CD4-positive, alpha-beta T cell (primary cell): ENCODE measurements at regions of chr15 and their contacts with region 1.

Region 1: DNA sequence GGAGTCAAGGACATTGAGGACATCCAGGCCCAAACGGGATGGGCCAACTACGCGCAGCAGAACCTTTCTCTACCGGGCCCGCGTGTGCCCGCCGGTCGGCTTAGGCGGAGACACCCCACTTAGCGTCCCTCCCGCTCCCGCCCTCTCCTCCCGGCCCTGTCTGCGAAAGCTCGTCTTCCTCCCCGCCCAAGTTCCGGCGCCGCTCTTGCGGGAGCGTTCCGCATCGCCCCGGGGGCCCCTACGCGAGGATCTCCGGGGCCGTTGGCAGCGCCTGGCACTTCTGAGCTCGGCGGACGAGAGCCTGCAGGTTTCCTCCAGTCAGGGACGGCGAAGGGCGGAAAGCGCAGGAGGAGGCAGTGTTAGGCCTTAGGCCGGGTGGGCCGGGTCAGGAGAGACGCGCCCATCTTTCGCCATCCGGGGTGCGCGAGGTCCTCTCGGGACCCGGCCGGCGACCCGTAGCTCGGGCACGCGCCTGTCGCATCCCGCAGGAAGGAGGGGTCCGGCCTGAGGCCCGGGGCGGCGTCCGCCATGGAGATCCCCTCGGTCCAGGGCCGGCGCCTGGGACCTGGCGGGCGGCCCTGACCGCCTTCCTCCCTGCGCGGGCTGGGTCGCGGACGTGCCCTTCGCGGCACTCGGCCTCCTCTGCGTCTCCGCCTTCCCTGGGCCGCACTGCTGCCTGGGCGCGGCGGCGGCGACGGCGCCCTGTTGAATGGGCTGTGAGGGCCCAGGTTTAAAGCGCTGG is at the start of gene FEM1B:
- DNase-seq: peak; percentile 80 to 96 (median 85)
- ATAC-seq: peak; percentile 76
- H3K4me3 ChIP-seq: peak within 1 kb of the TSS; percentile 67
- H3K4me3 Mint-ChIP-seq: peak within 1 kb of the TSS; percentile 98
- H3K27ac ChIP-seq: peak within 1 kb of the TSS; percentile 91 to 94
- H3K27ac Mint-ChIP-seq: peak within 1 kb of the TSS; percentile 99
- H3K4me1 ChIP-seq: peaks cover 36% of the 10 kb centered on the region
- H3K4me1 Mint-ChIP-seq: peaks cover 58% of the 10 kb centered on the region
- H3K27me3 ChIP-seq: no peaks in the 10 kb centered on the region
- H3K27me3 Mint-ChIP-seq: no peaks in the 10 kb centered on the region
- CTCF ChIP-seq: no peak
- total RNA-seq, gene FEM1B: 83.2 to 94.9 TPM

Region 2: DNA sequence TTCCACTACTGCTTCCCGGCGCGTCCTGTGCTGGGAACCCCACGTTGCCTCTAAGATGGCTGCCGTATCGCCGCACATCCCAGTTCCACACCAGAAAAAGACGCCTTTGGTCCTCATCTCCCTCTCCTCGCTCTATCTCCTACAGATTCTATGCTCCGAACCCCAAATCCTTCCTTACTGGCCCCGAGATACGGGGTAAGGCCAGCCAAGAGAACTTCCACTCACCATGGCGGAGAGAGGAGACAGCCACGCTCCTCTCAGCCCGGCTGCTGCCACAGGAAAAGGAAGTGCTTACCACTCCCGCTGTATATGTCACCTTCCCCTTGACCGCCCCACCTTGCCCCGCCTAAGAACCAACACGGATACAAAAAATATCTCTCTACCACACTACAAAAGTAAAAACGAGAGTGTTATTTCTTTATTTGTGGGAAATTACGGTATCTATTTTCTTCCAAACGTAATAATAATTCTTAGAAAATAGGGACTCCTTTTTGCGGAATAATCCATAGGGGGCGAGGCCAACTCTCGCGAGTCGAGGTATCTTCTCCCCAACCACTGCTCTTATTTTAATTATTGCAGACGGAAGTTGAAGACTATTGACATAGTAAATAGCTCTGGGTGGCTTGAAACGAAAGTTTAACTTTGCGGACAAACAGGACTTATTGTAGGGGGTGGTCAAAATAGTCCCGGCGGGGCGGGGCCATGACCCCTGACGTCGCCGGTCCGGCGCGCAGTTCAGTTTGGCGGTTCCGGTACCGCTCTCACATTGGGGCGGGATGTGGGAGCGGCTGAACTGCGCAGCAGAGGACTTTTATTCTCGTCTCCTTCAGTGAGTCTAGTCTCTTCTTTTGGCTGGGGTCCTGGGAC is 1773.0 kb before region 1 on chr15 and contains the starts of genes RPL4 and ZWILCH:
- CTCF ChIA-PET with region 1: no interaction called
- POLR2A ChIA-PET with region 1: no interaction called
- intact Hi-C with region 1: loop called in 1 of 2 experiments (anchors 5 kb)
- DNase-seq: peak; percentile 69 to 91 (median 77)
- ATAC-seq: peak; percentile 85
- H3K4me3 ChIP-seq: peak within 1 kb of the TSS; percentile 95
- H3K4me3 Mint-ChIP-seq: peak within 1 kb of the TSS; percentile 100
- H3K27ac ChIP-seq: peak within 1 kb of the TSS; percentile 85 to 95
- H3K27ac Mint-ChIP-seq: peak within 1 kb of the TSS; percentile 93
- H3K4me1 ChIP-seq: peaks cover 24% of the 10 kb centered on the region
- H3K4me1 Mint-ChIP-seq: peaks cover 51% of the 10 kb centered on the region
- H3K27me3 ChIP-seq: no peaks in the 10 kb centered on the region
- H3K27me3 Mint-ChIP-seq: no peaks in the 10 kb centered on the region
- CTCF ChIP-seq: no peak
- total RNA-seq, gene RPL4: 4,558 to 4,627 TPM
- total RNA-seq, gene ZWILCH: 6.8 to 7.2 TPM

Region 3: DNA sequence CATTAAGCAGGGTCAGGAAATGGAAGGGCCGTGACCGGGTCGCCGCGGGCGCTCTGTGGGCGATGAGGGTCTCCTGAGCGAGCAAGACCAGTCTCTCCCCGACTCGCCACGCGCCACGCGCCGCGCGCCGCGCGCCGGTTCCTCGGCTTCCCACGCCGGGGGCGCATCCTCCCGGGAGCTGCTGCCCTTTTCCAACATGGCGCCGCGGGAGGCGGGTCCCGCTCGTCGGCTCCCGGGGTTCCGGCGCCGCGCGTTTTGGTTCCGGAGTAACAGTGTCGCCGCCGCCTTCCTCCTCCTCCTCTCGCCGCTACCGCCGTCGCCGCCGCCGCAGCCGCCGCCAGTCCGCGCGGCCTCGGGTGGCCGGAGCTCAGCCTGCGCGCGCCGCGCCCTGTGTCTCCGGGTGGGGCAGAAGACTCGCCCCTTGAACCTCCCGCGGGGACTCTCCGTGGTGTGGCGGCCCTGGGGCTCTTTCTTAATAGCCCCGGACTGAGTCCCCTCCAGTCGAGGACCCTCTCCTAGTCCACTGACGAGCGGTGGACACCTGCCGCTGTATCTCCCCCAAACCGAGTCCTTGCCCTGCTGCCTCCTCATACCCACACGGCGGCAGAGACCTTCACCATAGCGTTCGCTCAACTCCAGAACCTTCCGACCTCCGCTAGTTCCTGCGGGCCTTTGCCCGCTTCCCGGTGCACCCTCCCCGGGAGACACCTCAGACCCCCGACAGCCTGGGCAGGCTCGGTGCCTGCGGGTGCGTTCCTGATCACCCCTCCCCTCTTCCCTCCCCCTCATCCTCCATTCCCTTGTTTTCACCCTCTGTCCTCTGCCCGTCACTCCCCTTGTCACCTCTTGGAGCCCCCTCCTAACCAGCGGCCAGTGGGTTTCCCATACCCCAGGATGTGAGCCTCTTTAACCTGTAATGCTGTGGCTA is 735.1 kb before region 1 on chr15 and contains the start of gene MAP2K5:
- CTCF ChIA-PET with region 1: no interaction called
- POLR2A ChIA-PET with region 1: no interaction called
- intact Hi-C with region 1: loop called in 1 of 2 experiments (anchors 2 kb)
- DNase-seq: peak; percentile 73 to 91 (median 81)
- ATAC-seq: peak; percentile 76
- H3K4me3 ChIP-seq: peak within 1 kb of the TSS; percentile 77
- H3K4me3 Mint-ChIP-seq: peak within 1 kb of the TSS; percentile 93
- H3K27ac ChIP-seq: peak within 1 kb of the TSS; percentile 74 to 78
- H3K27ac Mint-ChIP-seq: peak within 1 kb of the TSS; percentile 99
- H3K4me1 ChIP-seq: peaks cover 14% of the 10 kb centered on the region
- H3K4me1 Mint-ChIP-seq: peaks cover 58% of the 10 kb centered on the region
- H3K27me3 ChIP-seq: no peaks in the 10 kb centered on the region
- H3K27me3 Mint-ChIP-seq: no peaks in the 10 kb centered on the region
- CTCF ChIP-seq: no peak
- total RNA-seq, gene MAP2K5: 22.2 to 27.9 TPM

Region 4: GRCh38 chr15:68229386-68230156 is 48.2 kb before region 1 on chr15 and contains the start of gene CLN6:
- CTCF ChIA-PET with region 1: interaction called, 8 read pairs
- POLR2A ChIA-PET with region 1: interaction called, 38 read pairs
- intact Hi-C with region 1: loop called in 1 of 2 experiments (anchors 1 kb)
- DNase-seq: peak; percentile 57 to 93 (median 75)
- ATAC-seq: peak; percentile 82
- H3K4me3 ChIP-seq: peak within 1 kb of the TSS; percentile 88
- H3K4me3 Mint-ChIP-seq: peak within 1 kb of the TSS; percentile 92
- H3K27ac ChIP-seq: peak within 1 kb of the TSS in 1 of 2 donors; percentile 34
- H3K27ac Mint-ChIP-seq: peak within 1 kb of the TSS; percentile 73
- H3K4me1 ChIP-seq: peaks cover 29% of the 10 kb centered on the region
- H3K4me1 Mint-ChIP-seq: peaks cover 28% of the 10 kb centered on the region
- H3K27me3 ChIP-seq: no peaks in the 10 kb centered on the region
- H3K27me3 Mint-ChIP-seq: no peaks in the 10 kb centered on the region
- CTCF ChIP-seq: no peak
- total RNA-seq, gene CLN6: 8.0 to 8.1 TPM

Region 5: DNA sequence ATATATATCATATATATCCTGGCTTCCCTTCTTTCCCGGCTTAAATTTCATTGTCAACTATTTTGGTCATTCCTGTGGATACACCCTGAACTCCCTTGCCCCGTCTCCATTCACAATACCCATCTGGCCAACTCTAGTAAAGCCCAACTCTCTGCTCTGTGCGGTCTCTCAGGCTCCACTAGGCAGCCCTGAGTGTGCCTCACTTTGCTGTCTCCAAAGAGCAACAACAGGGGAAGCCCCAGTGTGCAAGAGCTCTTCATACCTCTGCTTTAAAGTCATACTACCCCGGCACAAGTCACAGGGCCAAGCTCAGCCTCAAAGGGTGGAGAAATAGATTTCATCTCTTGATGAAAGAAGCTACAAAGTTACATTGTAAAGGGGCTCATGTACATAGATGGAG is 19.1 kb before region 1 on chr15:
- CTCF ChIA-PET with region 1: interaction called, 10 read pairs
- POLR2A ChIA-PET with region 1: interaction called, 57 read pairs
- intact Hi-C with region 1: loop called (anchors 2 kb)
- DNase-seq: peak in 8 of 14 experiments; percentile 4 to 52 (median 26)
- ATAC-seq: peak; percentile 85
- H3K4me3 ChIP-seq: no peak overlapping the region
- H3K4me3 Mint-ChIP-seq: peak overlapping the region; percentile 17
- H3K27ac ChIP-seq: no peak overlapping the region
- H3K27ac Mint-ChIP-seq: peak overlapping the region; percentile 7
- H3K4me1 ChIP-seq: peaks cover 12% of the 10 kb centered on the region
- H3K4me1 Mint-ChIP-seq: peaks cover 14% of the 10 kb centered on the region
- H3K27me3 ChIP-seq: peaks cover 0 to 5% of the 10 kb centered on the region in 2 experiments
- H3K27me3 Mint-ChIP-seq: peaks cover 11% of the 10 kb centered on the region
- CTCF ChIP-seq: no peak

Region 6: GRCh38 chr15:68298882-68299381 is 21.2 kb after region 1 on chr15:
- CTCF ChIA-PET with region 1: interaction called, 6 read pairs
- POLR2A ChIA-PET with region 1: interaction called, 37 read pairs
- intact Hi-C with region 1: loop called in 1 of 2 experiments (anchors 2 kb)
- DNase-seq: peak in 4 of 14 experiments; percentile 14 to 67 (median 59)
- ATAC-seq: peak; percentile 82
- H3K4me3 ChIP-seq: peak overlapping the region; percentile 53
- H3K4me3 Mint-ChIP-seq: peak overlapping the region; percentile 80
- H3K27ac ChIP-seq: peak overlapping the region in 1 of 2 donors; percentile 45
- H3K27ac Mint-ChIP-seq: peak overlapping the region; percentile 88
- H3K4me1 ChIP-seq: peaks cover 13% of the 10 kb centered on the region
- H3K4me1 Mint-ChIP-seq: peaks cover 57% of the 10 kb centered on the region
- H3K27me3 ChIP-seq: no peaks in the 10 kb centered on the region
- H3K27me3 Mint-ChIP-seq: no peaks in the 10 kb centered on the region
- CTCF ChIP-seq: no peak

Region 7: DNA sequence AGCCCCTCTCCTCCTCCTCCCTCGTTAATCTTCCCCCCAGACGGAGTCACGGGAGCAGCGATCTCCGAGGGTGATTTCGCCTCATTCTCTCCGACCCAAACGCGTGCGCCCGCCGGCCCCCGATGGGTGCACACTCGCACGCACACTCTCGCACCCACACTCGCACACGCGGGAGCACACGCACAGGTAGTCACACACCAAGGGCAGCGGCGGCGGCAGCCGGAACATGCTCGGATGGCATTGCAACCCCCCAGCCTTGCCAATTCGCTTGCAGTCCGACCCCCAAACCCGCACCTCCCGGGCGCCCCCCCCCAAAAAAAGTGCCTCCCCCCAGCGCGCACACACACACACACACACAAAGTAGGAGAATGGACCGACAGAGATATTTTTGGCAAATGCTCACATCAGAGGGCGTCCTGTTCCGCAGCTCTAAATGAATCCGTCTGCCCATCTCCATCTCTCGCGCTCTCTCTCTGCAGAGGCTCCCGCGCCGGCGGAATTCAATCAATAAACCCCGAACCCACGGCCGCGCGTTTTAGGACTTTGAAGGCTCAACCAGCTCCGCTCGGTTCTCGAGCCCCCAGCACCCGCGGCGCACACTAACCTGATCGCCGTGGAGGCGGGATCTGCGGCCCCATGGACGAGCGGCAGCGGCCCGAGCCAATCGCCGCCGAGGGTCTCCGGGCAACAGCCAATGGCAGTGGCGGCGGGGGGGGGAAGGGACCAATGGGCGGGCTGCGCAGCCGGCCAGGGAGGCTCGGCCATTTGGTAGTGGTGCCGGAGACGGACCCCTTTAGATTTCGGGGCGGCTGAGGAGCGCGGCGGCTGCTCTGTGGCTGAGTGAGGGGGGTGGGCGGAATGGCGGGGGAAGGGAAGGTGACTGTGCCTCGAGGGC is 542.8 kb after region 1 on chr15 and contains the start of gene ANP32A:
- CTCF ChIA-PET with region 1: no interaction called
- POLR2A ChIA-PET with region 1: interaction called, 17 read pairs
- intact Hi-C with region 1: loop called in 1 of 2 experiments (anchors 10 kb)
- DNase-seq: peak; percentile 94 to 99 (median 96)
- ATAC-seq: peak; percentile 62
- H3K4me3 ChIP-seq: peak within 1 kb of the TSS; percentile 98
- H3K4me3 Mint-ChIP-seq: peak within 1 kb of the TSS; percentile 95
- H3K27ac ChIP-seq: peak within 1 kb of the TSS; percentile 74 to 89
- H3K27ac Mint-ChIP-seq: peak within 1 kb of the TSS; percentile 92
- H3K4me1 ChIP-seq: peaks cover 22% of the 10 kb centered on the region
- H3K4me1 Mint-ChIP-seq: peaks cover 36% of the 10 kb centered on the region
- H3K27me3 ChIP-seq: no peaks in the 10 kb centered on the region
- H3K27me3 Mint-ChIP-seq: no peaks in the 10 kb centered on the region
- CTCF ChIP-seq: no peak
- total RNA-seq, gene ANP32A: 55.1 to 57.3 TPM